Cardiac septum (tissue), 1 donor: ENCODE measurements at regions of chr20 and their contacts with region 1.

Region 1: DNA sequence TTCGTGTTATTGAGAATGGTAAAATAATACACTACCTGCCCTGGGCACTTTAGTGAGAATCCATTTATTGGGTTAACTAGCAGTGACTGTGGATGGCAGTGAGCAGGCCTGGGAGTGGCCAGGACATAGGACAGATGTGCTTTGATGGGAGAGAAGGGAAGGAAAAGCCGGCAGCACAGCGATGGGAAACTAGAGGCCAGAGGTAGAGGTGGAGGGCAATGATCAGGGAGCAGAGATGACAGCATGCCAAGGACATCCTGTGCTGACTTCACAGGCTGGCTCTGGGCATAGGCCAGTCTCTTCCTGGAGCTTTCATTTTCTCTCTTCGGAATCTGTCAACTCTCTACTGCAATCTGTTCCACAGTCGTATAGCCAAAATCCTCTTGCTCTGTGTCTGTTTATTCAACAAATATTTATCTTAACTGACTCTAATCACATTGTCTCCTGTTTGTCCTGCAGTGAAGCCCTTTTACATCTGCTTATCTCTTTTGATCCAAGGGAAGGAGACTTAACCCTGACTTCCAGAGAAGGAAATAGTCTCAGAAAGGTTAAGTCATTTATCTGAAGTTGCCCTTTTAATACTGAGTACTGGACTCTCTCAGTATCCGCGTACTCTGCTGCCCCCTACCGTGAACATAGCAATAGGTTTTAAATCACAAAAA is 18.4 kb upstream of the MMP24 start:
- DNase-seq: peak; percentile 85

Region 2: GRCh38 chr20:35092524-35093266 is 115.4 kb before region 1 on chr20 and contains the start of gene TRPC4AP:
- intact Hi-C with region 1: loop called (anchors 2 kb)
- DNase-seq: peak; percentile 97
- total RNA-seq, gene TRPC4AP: 34.9 TPM

Region 3: DNA sequence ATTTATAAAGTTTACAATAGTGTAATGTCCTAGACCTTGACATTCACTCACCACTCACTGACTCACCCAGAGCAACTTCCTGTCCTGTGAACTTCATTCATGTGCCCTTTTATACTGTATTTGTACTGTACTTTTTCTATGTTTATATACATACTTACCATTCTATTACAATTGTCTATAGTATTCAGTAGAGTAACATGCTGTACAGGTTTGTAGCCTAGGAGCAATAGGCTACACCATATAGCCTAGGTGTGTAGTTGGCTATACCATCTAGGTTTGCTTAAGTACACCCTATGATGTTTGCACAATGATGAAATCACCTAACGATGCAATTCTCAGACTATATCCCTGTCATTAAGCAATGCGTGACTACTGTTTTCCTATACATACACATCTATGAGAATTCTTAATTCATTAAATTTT is 78.4 kb before region 1 on chr20:
- intact Hi-C with region 1: no loop called
- DNase-seq: no peak

Region 4: DNA sequence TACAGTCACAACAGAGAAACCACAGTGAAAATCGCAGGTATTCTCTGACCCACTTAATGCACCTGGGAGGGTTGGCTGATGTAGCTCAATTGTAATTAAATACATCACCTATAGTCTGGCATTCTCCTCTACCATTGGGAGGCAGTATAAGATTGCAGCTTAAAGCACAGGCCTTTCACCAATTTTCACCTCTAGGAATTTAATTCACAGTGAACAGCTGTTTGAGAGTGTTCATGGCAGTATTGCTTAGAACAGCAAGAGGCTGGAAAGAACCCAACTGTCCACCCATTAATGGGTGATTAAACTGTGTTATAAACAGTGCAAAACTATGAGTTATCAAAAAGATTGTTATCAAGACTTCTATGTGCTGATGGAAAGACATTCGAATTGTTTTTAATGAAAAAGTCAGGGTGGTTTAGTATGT is 62.9 kb before region 1 on chr20:
- intact Hi-C with region 1: loop called (anchors 1 kb)
- DNase-seq: no peak

Region 5: DNA sequence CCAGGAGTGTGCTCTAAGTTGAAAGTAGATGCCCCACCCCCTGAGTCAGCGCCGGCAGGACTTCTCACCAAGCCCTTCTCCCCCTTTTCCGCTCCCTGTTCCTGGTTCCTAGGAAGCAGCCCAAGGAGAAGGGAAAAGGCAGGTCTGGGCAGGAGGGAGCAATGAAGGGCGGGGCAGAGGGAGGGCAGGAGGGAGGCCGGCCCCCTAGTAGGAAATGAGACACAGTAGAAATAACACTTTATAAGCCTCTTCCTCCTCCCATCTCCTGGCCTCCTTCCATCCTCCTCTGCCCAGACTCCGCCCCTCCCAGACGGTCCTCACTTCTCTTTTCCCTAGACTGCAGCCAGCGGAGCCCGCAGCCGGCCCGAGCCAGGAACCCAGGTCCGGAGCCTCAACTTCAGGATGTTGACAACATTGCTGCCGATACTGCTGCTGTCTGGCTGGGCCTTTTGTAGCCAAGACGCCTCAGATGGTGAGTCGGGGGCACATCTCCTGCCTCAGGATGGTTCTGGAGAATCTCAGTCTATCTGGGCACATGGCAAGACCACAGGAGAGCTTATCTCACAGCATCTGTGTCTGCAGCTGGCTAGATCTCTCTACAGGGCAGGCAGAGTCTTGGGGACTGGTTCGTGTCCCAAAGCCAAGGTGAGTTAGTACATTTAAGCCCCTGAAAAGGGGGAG is 36.2 kb before region 1 on chr20 and contains the start of gene PROCR:
- intact Hi-C with region 1: no loop called
- DNase-seq: peak; percentile 92
- total RNA-seq, gene PROCR: 5.4 TPM